IMR-90 (cell line): ENCODE measurements at regions of chrX and their contacts with region 1.

Region 1: GRCh38 chrX:41137589-41137988 is 52.3 kb downstream of the USP9X start:
- DNase-seq: peak; percentile 19
- ATAC-seq: no peak
- H3K4me3 ChIP-seq: no peak overlapping the region
- H3K27ac ChIP-seq: no peak overlapping the region
- H3K4me1 ChIP-seq: no peaks in the 10 kb centered on the region
- H3K27me3 ChIP-seq: no peaks in the 10 kb centered on the region
- CTCF ChIP-seq: peak; percentile 48
- POLR2A ChIP-seq: no peak
- RAD21 ChIP-seq: 0 out of 2 replicates have a peak, but pooled peaks have one; percentile 15

Region 2: GRCh38 chrX:40622479-40623138 is 515.0 kb before region 1 on chrX:
- CTCF ChIA-PET with region 1: no interaction called
- POLR2A ChIA-PET with region 1: no interaction called
- dilution Hi-C with region 1: no loop called
- in situ Hi-C with region 1: no loop called
- intact Hi-C with region 1: no loop called
- DNase-seq: no peak
- ATAC-seq: no peak
- H3K4me3 ChIP-seq: no peak overlapping the region
- H3K27ac ChIP-seq: no peak overlapping the region
- H3K4me1 ChIP-seq: no peaks in the 10 kb centered on the region
- H3K27me3 ChIP-seq: peaks cover 3% of the 10 kb centered on the region
- CTCF ChIP-seq: no peak
- POLR2A ChIP-seq: no peak
- RAD21 ChIP-seq: no peak

Region 3: DNA sequence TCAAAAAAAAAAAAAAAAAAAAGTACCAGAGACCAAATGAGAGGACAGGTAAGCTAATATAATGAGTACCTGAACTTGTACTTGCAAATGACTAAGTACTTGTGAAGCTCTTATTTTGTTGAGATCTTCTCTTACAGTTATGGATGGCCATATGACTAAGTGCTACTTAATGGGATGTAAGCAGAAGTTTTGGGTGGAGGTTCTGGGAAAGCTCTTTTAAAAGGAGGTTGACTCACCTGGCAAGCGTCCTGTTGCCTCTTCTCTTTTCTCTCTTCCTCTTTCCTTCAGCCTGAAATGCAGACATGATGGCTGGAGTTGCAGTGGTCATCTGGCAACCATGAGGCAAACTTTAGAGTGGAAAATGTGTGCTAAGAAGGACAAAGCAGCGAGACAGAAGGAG is 365.3 kb before region 1 on chrX:
- CTCF ChIA-PET with region 1: no interaction called
- POLR2A ChIA-PET with region 1: no interaction called
- dilution Hi-C with region 1: no loop called
- in situ Hi-C with region 1: no loop called
- intact Hi-C with region 1: no loop called
- DNase-seq: peak; percentile 75
- ATAC-seq: no peak
- H3K4me3 ChIP-seq: no peak overlapping the region
- H3K27ac ChIP-seq: no peak overlapping the region
- H3K4me1 ChIP-seq: no peaks in the 10 kb centered on the region
- H3K27me3 ChIP-seq: no peaks in the 10 kb centered on the region; the same call in 1 of the 2 replicates
- CTCF ChIP-seq: no peak
- POLR2A ChIP-seq: no peak
- RAD21 ChIP-seq: no peak

Region 4: DNA sequence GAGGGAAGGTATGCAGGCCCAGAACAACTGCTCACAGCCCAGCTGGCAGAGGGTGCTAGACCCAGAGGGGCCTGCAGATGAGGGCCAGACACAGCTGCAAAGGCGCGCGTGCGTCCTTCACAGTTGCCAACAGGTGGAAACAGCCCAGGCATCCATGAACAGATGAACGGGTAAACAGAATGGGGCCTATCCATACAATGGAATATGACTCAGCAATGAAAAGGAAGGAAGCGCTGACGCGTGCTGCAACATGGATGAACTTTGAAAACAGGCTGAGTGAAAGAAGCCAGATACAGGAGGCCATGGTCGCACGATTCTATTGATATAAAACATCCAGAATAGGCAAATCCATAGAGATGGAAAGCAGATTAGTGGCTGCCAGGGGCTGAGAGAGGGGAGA is 113.3 kb after region 1 on chrX:
- CTCF ChIA-PET with region 1: interaction called, 3 read pairs
- POLR2A ChIA-PET with region 1: no interaction called
- dilution Hi-C with region 1: no loop called
- in situ Hi-C with region 1: no loop called
- intact Hi-C with region 1: loop called (anchors 5 kb)
- DNase-seq: no peak
- ATAC-seq: no peak
- H3K4me3 ChIP-seq: no peak overlapping the region
- H3K27ac ChIP-seq: no peak overlapping the region
- H3K4me1 ChIP-seq: no peaks in the 10 kb centered on the region
- H3K27me3 ChIP-seq: peaks cover 4% of the 10 kb centered on the region; the same call in 1 of the 2 replicates
- CTCF ChIP-seq: no peak
- POLR2A ChIP-seq: no peak
- RAD21 ChIP-seq: no peak